PC-3 (cell line): ENCODE measurements at regions of chr9 and their contacts with region 1.

Region 1: GRCh38 chr9:95268681-95269080 is 48.8 kb downstream of the FANCC start:
- DNase-seq: peak; percentile 23
- ATAC-seq: peak; percentile 45; the same call in 1 of the 2 replicates
- H3K4me3 ChIP-seq: no peak overlapping the region
- H3K27ac ChIP-seq: no peak overlapping the region
- H3K4me1 ChIP-seq: no peaks in the 10 kb centered on the region
- H3K27me3 ChIP-seq: no peaks in the 10 kb centered on the region
- CTCF ChIP-seq: peak; percentile 47

Region 2: GRCh38 chr9:95249986-95250385 is 18.7 kb before region 1 on chr9:
- CTCF ChIA-PET with region 1: no interaction called
- POLR2A ChIA-PET with region 1: interaction called, 12 read pairs
- intact Hi-C with region 1: no loop called
- DNase-seq: no peak
- ATAC-seq: no peak
- H3K4me3 ChIP-seq: no peak overlapping the region
- H3K27ac ChIP-seq: no peak overlapping the region
- H3K4me1 ChIP-seq: no peaks in the 10 kb centered on the region
- H3K27me3 ChIP-seq: no peaks in the 10 kb centered on the region
- CTCF ChIP-seq: no peak

Region 3: DNA sequence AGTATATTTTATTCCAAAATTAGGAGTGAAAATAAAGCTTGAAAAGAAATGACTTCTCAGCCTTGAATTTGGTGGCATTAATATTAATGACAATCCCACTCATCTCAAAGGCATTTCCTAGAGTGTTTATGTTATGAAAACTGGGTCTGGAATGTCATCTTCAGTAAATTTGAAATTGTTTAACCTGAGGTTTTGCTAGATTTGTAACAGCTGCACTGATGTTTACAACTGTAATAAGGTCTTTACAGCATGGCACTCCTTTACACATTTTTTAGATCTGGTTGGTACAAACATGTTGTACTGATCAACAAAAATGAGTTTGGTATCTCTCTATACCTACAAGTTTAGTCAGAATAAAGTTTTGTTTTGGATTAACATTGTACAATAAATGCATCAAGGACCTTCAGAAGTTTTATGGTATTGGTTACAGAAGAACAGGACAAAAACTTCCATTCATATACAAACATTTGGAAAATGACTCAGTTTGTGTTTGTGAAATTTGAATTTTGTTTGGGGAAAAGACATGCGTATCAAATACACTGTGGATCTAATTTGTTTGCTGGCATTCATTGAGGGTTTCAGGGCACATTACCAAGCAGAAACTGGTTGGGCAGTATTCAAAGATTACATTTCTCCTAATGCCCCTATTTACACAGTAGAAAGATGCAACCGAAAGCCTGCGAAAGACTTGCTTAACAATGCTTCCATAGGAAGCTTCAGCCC is 37.2 kb after region 1 on chr9:
- CTCF ChIA-PET with region 1: no interaction called
- POLR2A ChIA-PET with region 1: no interaction called
- intact Hi-C with region 1: loop called (anchors 5 kb)
- DNase-seq: peak; percentile 63
- ATAC-seq: peak; percentile 79
- H3K4me3 ChIP-seq: peak overlapping the region; percentile 51
- H3K27ac ChIP-seq: peak overlapping the region; percentile 60
- H3K4me1 ChIP-seq: peaks cover 25% of the 10 kb centered on the region
- H3K27me3 ChIP-seq: no peaks in the 10 kb centered on the region
- CTCF ChIP-seq: no peak

Region 4: DNA sequence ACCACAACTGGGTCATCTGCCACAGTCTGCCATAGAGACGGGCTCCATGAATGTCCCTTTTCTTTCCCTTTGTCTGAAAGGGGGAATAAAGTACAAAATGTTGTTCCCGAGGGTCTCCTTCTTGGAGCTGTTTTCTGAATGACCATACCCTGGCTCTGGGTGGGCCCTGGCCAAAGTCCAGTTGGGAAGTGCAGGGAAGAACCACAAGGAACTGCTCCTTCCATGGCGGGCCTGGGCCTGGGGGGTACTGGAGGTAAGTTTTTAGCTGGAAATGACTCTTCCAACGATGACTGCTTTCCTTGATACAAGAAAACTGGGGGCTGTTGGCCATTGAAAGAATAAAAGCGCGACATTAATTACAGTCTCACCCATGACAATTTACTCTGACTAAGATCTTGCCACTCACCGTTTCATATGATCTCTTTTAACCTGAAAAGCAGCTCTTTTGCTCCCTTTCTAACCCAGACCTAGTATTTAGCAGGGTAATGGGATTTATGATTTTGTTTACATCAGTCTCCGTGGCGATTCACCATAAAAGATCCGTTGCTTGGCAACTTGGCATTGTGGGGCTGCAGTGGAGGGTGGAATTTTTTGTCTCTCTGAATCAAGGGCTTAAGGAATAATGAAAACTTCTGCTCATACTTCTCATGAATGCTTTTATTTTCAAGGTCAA is 337.3 kb after region 1 on chr9:
- CTCF ChIA-PET with region 1: no interaction called
- POLR2A ChIA-PET with region 1: no interaction called
- intact Hi-C with region 1: no loop called
- DNase-seq: no peak
- ATAC-seq: no peak
- H3K4me3 ChIP-seq: no peak overlapping the region
- H3K27ac ChIP-seq: no peak overlapping the region
- H3K4me1 ChIP-seq: no peaks in the 10 kb centered on the region
- H3K27me3 ChIP-seq: no peaks in the 10 kb centered on the region
- CTCF ChIP-seq: no peak

Region 5: GRCh38 chr9:96217754-96218693 is 949.3 kb after region 1 on chr9:
- CTCF ChIA-PET with region 1: no interaction called
- POLR2A ChIA-PET with region 1: no interaction called
- intact Hi-C with region 1: loop called (anchors 10 kb)
- DNase-seq: peak; percentile 67
- ATAC-seq: peak; percentile 93
- H3K4me3 ChIP-seq: peak overlapping the region; percentile 62
- H3K27ac ChIP-seq: no peak overlapping the region
- H3K4me1 ChIP-seq: no peaks in the 10 kb centered on the region
- H3K27me3 ChIP-seq: no peaks in the 10 kb centered on the region
- CTCF ChIP-seq: peak; percentile 87